ENCODE measurements at regions of chr10 and their contacts with region 1.

Region 1: GRCh38 chr10:30783939-30784500 is 154.5 kb upstream of the LYZL2 start:
- DNase-seq: peak; percentile 91
- CTCF ChIP-seq: peak; percentile 90

Region 2: GRCh38 chr10:30309401-30309800 is 474.6 kb before region 1 on chr10:
- in situ Hi-C with region 1: no loop called
- DNase-seq: no peak
- CTCF ChIP-seq: no peak

Region 3: DNA sequence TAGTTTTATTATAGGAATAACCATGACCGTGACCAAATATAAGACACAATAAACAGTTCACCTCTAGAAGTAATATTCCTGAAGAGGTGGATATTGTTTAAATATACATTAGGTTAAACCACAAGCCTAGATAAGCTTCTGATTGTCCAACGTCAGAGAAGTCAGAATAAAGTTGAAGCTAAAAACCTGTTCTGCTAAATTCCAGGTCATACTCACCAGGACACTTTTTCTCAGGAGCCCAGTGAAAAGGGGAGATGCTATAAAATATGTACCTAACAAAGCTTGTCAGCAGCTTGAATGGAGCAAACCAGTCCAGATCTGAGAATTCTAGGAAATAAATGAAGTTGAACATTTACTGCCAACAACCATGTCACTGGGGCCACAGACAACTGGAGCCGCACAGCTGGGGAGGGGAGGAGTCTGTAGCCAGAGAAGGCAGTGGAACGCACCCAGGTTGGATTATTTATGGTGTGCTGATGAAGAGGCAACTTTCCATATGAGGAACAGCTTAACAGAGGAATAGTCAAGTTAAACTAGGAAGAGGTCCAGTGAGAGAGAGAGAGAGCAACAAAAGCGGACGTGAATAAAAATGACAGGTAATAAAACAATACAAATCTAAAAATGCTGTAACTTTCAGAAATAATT is 56.5 kb after region 1 on chr10:
- in situ Hi-C with region 1: no loop called
- DNase-seq: no peak
- CTCF ChIP-seq: no peak

Region 4: DNA sequence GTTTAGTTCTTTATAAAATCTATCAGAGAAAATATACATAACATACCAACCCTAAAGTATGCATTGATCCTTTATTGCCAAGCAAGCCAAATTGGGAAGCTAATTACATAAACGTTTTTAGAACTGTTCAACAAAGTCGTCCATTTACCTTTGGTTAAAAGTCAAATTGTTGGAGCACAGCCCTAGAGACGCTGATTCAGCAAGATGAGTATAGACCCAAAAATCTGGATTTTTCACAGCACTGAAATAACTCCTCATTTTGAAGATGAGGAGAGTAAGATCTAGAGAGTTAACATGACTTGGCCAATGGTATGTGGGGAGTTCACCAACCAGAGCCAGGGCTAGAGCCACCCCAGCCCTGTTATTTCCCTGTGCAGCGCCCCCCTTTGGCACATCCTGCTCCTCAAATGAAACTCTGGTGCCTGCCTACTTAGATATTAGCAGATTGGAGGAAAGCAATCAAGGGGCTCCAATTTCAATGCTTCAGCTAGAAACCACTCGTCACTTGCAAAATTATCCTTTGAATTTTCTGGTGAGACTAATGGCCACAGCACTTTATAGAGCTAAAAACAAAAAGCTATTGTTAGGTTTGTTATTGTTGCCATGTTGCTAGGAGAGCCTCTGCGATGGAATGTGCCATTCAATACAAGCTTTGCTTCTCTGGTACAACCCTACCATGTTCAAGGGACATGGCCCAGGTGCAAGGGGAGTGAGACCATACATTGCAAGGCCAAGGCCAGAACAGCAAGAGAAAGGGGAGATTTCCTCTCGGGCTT is 402.4 kb after region 1 on chr10:
- in situ Hi-C with region 1: no loop called
- DNase-seq: no peak
- CTCF ChIP-seq: no peak

Region 5: DNA sequence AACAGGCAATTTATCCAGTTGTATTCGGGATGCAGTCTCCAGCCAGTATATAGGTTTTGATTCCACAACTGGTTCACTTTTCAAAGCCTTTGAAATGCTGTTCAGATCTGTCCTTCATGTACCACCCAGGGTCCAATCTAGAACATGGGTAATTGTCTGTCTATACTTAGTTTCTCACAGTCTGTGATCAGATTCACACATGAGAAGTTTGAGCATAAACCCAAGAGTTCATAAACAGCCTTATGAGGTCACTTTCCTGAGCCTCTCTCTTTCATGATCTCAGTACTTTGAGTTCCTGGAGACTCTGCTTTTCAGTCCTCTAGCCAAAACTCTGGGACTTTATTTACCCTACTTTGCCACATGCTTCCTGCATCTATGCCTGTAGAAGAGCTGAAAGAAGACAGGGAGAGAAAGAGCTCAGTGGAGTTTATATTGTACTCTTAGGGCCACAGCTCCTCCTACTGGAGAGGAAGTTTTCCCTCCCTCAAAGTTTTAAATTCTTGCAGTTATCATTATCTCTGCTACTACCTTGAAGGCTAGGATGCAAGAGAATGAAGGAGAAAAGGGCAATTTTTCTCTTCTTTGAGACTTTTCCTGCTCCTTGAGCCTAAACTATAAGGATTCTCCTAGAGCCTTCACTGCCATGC is 707.0 kb after region 1 on chr10:
- in situ Hi-C with region 1: loop called (anchors 25 kb)
- DNase-seq: peak; percentile 4
- CTCF ChIP-seq: peak; percentile 52

Region 6: DNA sequence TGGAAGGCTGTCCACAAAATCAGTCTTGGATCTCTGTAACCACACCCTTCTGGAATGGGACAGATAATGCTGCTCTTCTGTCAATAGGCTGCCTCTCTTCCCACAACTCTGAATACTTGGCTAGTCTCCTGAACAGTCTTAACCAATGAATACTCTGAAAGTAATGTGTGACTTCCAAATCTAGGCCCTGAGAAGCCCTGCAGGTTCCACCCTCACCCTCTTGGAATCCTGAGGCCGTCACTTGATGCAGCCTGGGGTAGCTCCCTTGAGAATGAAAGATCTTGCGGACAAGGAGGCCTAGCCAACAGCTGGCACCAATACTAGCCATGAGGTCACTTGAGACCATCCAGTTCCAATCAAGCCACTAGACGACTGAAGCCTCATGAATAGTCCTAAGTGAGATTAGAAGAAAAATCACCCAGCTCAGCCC is 1035.4 kb after region 1 on chr10:
- in situ Hi-C with region 1: loop called (anchors 10 kb)
- DNase-seq: no peak
- CTCF ChIP-seq: no peak